CD4-positive, alpha-beta T cell (primary cell): ENCODE measurements at regions of chr2 and their contacts with region 1.

Region 1: DNA sequence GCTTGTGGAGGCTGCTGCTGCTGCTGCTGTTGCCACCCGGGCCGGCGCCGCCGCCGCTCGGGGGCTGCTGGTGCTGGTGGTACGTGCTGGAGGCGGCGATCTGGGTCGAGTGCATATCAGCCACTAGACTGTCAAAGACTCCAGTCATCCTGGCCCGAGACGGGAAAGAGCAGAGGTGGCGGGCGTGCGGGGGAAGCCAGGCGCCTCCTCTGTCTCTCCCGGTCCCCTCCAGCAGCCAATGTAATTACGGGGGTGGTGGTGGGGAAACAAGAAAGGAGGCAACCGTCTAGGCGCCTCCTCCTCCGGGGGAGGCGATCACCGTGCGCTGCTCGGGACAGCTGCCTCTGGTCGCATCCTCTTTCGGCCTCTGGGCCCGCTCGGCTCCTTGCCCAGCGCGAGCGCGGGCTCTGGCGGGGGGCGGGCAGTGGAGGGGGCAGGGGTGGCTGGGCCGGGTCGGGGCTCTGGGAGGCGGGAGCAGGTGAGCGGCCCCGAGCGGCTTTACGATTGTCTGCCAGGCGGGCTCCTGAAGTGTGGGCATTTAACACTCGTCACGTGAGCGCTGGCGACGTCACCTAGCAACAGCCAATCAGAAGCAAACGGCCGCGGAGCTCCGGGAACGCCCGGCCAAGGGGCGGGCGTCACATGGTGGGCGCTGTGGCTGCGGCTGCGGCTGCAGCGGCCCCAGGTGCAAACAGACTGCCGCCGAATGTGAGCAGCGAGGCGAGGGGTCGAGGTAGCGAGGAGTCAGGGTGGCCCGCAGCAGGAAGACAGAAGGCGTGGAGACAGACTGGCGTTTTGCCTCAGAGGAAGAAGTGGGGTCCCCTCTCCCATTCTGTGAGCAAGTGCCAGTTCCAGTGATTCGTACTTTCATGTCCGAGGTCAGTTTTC is at the start of gene DLX2:
- DNase-seq: peak in 8 of 14 experiments; percentile 38 to 84 (median 60)
- ATAC-seq: peak; percentile 12
- H3K4me3 ChIP-seq: peak within 1 kb of the TSS; percentile 55
- H3K4me3 Mint-ChIP-seq: peak within 1 kb of the TSS; percentile 84
- H3K27ac ChIP-seq: no peak within 1 kb of the TSS
- H3K27ac Mint-ChIP-seq: peak within 1 kb of the TSS; percentile 66
- H3K4me1 ChIP-seq: peaks cover 82% of the 10 kb centered on the region
- H3K4me1 Mint-ChIP-seq: peaks cover 50% of the 10 kb centered on the region
- H3K27me3 ChIP-seq: peaks cover 95 to 98% of the 10 kb centered on the region in 2 experiments
- H3K27me3 Mint-ChIP-seq: peaks cover 80% of the 10 kb centered on the region
- CTCF ChIP-seq: no peak
- total RNA-seq, gene DLX2: not detected

Region 2: DNA sequence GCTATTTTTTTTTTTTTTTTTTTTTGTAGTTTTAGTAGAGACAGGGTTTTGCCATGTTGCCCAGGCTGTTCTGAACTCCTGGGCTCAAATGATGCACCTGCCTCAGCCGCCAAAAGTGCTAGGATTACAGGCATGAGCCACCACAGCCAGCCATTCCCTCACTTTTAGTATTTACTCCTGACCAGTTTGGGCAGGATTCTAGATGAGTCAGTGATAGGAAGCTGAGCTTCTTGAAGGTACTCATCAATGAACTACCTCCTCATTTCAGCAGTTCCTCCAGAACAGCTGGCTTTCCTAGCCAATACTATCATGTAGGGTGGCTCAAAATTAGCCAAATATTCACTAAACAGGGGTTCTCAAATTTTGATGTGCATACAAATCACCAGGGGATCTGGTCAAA is 523.2 kb before region 1 on chr2:
- CTCF ChIA-PET with region 1: no interaction called
- POLR2A ChIA-PET with region 1: no interaction called
- intact Hi-C with region 1: loop called (anchors 5 to 10 kb)
- DNase-seq: no peak
- ATAC-seq: no peak
- H3K4me3 ChIP-seq: no peak overlapping the region
- H3K4me3 Mint-ChIP-seq: no peak overlapping the region
- H3K27ac ChIP-seq: no peak overlapping the region
- H3K27ac Mint-ChIP-seq: no peak overlapping the region
- H3K4me1 ChIP-seq: no peaks in the 10 kb centered on the region
- H3K4me1 Mint-ChIP-seq: peaks cover under 1% of the 10 kb centered on the region
- H3K27me3 ChIP-seq: no peaks in the 10 kb centered on the region
- H3K27me3 Mint-ChIP-seq: peaks cover 7% of the 10 kb centered on the region
- CTCF ChIP-seq: no peak

Region 3: DNA sequence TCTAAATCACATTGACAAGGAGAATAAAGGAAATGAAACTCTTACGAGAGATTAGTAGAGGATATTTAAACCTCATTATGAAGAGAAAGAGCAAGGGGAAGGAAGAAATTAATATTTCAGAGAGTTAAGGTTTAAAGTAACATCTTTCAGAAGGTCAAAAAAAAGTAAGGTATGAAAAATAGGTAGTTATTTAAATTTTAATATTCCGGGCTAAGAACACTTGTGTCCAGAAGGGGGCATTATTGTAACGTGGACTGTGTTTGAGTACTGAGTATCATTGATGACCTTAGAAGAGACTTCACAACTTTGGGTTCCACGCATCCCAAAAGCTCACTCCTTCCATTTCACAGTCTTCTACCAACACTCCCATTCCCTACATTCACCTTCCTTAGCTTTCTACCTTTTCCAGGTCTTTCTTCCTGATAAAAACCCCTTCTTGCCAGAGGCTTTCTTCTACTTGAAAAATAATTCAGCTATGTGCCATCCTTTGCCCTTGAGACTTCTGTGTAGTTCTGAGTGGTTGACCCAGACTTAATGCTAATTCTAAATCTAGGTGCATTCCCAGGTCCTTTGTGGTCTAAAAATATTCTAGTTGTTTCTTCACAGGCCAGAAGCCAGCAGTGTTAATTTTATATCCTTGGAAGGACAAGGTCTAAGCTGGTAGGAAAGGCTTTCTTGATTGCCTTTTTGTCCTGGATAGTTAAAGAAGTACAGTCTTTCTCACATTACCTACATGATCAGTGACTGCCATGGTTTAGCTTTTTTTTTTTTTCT is 398.9 kb before region 1 on chr2:
- CTCF ChIA-PET with region 1: no interaction called
- POLR2A ChIA-PET with region 1: no interaction called
- intact Hi-C with region 1: loop called (anchors 1 to 5 kb)
- DNase-seq: peak in 4 of 14 experiments; percentile 5 to 59 (median 50)
- ATAC-seq: peak; percentile 52
- H3K4me3 ChIP-seq: no peak overlapping the region
- H3K4me3 Mint-ChIP-seq: no peak overlapping the region
- H3K27ac ChIP-seq: no peak overlapping the region
- H3K27ac Mint-ChIP-seq: peak overlapping the region; percentile 11
- H3K4me1 ChIP-seq: no peaks in the 10 kb centered on the region
- H3K4me1 Mint-ChIP-seq: peaks cover 17% of the 10 kb centered on the region
- H3K27me3 ChIP-seq: no peaks in the 10 kb centered on the region
- H3K27me3 Mint-ChIP-seq: no peaks in the 10 kb centered on the region
- CTCF ChIP-seq: peak; percentile 50

Region 4: GRCh38 chr2:171922230-171923022 is 180.2 kb before region 1 on chr2 and contains the start of gene HAT1:
- CTCF ChIA-PET with region 1: no interaction called
- POLR2A ChIA-PET with region 1: interaction called, 3 read pairs
- intact Hi-C with region 1: loop called in 1 of 2 experiments (anchors 5 kb)
- DNase-seq: peak; percentile 94 to 99 (median 96)
- ATAC-seq: peak; percentile 95
- H3K4me3 ChIP-seq: peak within 1 kb of the TSS; percentile 93
- H3K4me3 Mint-ChIP-seq: peak within 1 kb of the TSS; percentile 100
- H3K27ac ChIP-seq: peak within 1 kb of the TSS; percentile 83 to 96
- H3K27ac Mint-ChIP-seq: peak within 1 kb of the TSS; percentile 93
- H3K4me1 ChIP-seq: peaks cover 18% of the 10 kb centered on the region
- H3K4me1 Mint-ChIP-seq: peaks cover 47% of the 10 kb centered on the region
- H3K27me3 ChIP-seq: no peaks in the 10 kb centered on the region
- H3K27me3 Mint-ChIP-seq: no peaks in the 10 kb centered on the region
- CTCF ChIP-seq: no peak
- total RNA-seq, gene HAT1: 20.3 to 22.6 TPM

Region 5: GRCh38 chr2:172339371-172340010 is 236.9 kb after region 1 on chr2:
- CTCF ChIA-PET with region 1: no interaction called
- POLR2A ChIA-PET with region 1: no interaction called
- intact Hi-C with region 1: no loop called
- DNase-seq: peak in 3 of 14 experiments; percentile 24 to 35 (median 32)
- ATAC-seq: peak; percentile 43
- H3K4me3 ChIP-seq: peak overlapping the region; percentile 4
- H3K4me3 Mint-ChIP-seq: peak overlapping the region; percentile 72
- H3K27ac ChIP-seq: no peak overlapping the region
- H3K27ac Mint-ChIP-seq: peak overlapping the region; percentile 6
- H3K4me1 ChIP-seq: peaks cover 10% of the 10 kb centered on the region
- H3K4me1 Mint-ChIP-seq: peaks cover 24% of the 10 kb centered on the region
- H3K27me3 ChIP-seq: no peaks in the 10 kb centered on the region
- H3K27me3 Mint-ChIP-seq: no peaks in the 10 kb centered on the region
- CTCF ChIP-seq: no peak

Region 6: DNA sequence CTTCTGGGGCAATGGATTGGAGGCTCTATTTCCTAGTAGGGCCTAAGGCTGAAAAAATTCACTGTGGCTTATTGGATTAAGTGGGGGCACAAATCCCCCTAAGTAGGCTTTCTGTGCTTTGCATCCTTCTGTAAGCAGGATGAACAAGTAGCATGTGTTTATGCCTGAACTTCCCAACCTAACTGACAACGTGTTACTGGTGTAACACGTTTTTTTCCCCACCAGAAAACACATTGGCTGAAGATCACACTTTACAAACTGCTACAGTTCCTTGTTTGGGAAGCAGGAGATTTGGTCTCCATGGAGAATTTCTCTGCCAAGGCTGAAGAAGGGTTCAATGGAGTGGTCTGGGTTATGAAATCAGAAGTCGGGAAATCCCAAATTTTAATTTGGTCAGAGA is 317.6 kb after region 1 on chr2:
- CTCF ChIA-PET with region 1: no interaction called
- POLR2A ChIA-PET with region 1: no interaction called
- intact Hi-C with region 1: loop called in 1 of 2 experiments (anchors 5 kb)
- DNase-seq: no peak
- ATAC-seq: no peak
- H3K4me3 ChIP-seq: no peak overlapping the region
- H3K4me3 Mint-ChIP-seq: no peak overlapping the region
- H3K27ac ChIP-seq: no peak overlapping the region
- H3K27ac Mint-ChIP-seq: no peak overlapping the region
- H3K4me1 ChIP-seq: peaks cover 3% of the 10 kb centered on the region
- H3K4me1 Mint-ChIP-seq: peaks cover 27% of the 10 kb centered on the region
- H3K27me3 ChIP-seq: no peaks in the 10 kb centered on the region
- H3K27me3 Mint-ChIP-seq: peaks cover 14% of the 10 kb centered on the region
- CTCF ChIP-seq: no peak